PC-3 (cell line): ENCODE measurements at regions of chr17 and their contacts with region 1.

Region 1: DNA sequence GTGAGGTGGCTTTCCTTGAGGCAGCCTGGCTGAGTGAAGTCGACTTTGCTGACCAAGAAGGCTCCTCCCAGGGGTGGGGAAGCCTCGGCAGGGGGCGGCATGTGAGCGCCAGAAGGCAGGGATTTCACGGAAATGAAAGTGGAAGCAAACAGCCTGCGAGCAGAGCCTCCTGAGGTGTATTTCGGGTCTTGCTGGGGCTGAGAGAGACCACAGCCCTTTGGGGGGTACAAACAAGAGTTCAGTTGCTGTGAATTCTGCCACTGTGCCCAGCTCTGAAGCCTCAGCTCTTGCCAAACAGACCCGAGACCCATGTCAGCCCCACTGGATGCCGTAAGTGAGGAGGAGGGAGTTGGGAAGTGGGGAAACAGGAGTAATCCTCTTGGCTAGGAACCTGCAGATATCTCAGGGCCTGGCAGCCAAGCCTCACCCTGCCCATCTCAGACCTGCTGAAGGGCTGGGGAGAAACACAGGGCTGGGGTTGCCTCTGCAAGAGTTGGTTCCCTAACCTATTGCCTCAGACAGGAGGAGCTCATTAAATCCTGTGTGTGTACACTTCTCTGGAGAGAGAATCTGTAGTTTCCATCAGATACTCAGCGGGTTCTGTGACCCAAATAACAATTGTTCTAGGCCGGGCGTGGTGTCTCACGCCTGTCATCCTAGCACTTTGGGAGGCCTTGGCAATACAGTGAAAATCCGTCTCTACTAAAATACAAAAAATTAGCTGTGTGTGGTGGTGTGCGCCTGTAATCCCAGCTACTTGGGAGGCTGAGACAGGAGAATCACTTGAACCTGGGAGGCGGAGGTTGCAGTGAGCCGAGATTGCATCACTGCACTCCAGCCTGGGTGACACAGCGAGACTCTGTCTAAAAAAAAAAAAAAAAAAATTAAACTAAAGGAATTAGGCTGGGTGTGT is at the start of gene IFI35:
- DNase-seq: peak; percentile 60
- ATAC-seq: peak; percentile 72
- H3K4me3 ChIP-seq: peak within 1 kb of the TSS; percentile 77
- H3K27ac ChIP-seq: peak within 1 kb of the TSS; percentile 86
- H3K4me1 ChIP-seq: peaks cover 26% of the 10 kb centered on the region
- H3K27me3 ChIP-seq: no peaks in the 10 kb centered on the region
- CTCF ChIP-seq: peak; percentile 46; the same call in 1 of the 2 replicates
- total RNA-seq, gene IFI35: 8.7 and 12.3 TPM in 2 replicates

Region 2: DNA sequence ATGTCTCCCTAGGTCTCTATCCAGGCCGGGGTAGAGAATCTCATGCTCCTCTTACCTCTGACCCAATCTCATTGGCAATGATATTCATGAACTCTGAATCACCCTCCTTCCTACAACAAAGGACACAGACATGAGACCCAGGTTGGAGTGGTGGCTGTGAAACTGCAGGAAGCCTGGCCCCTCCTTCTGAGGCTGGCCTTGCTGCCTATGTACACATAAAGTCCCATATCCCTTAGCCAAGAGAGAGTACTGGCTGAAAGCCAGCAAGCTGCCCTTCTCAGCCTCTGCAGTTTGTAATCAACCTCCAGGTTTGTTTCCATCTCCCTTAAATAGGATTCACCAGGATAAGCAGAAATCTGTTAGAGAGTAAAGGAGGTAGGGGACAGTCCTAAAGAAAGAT is 53.2 kb before region 1 on chr17:
- CTCF ChIA-PET with region 1: no interaction called
- POLR2A ChIA-PET with region 1: interaction called, 16 read pairs
- intact Hi-C with region 1: no loop called
- DNase-seq: no peak
- ATAC-seq: peak; percentile 45
- H3K4me3 ChIP-seq: no peak overlapping the region
- H3K27ac ChIP-seq: no peak overlapping the region
- H3K4me1 ChIP-seq: no peaks in the 10 kb centered on the region
- H3K27me3 ChIP-seq: no peaks in the 10 kb centered on the region
- CTCF ChIP-seq: no peak

Region 3: DNA sequence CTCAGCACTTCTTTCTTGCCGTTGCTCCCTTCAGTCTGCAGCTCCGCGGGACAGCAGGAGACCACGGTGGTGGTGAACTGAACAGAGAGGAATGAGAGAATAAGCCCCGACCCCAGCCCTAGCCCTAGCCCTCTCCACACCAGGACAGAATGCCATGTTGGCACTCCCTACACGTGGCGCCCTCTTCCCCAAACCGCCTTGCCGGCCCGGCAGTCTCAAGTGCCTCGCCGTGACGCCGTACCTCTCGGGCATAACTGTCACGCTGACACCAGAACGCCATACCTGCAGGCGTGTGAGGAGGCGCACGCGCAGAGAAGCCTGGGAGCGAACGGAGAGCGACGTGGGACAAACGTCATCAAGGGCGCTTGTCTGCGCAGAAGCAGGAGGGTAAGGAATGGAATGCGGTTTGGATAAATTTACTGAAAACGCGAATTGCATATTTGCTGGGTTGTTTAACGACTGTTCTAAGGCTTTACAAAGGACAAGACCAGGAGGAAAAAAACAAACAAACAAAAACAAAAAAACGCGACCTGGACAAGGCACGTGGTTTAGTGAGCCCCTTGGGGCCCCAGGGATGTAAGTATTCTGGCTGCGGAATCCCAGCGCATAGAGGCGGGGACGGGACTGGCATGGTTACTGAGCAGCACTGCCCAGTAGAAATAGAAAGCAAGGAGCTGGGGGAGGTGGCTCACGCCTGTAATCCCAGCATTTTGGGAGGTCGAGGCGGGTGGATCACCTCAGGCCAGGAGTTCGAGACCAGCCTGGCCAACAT is 42.5 kb before region 1 on chr17 and contains the start of gene AARSD1:
- CTCF ChIA-PET with region 1: interaction called, 10 read pairs
- POLR2A ChIA-PET with region 1: no interaction called
- intact Hi-C with region 1: no loop called
- DNase-seq: peak; percentile 90
- ATAC-seq: peak; percentile 97
- H3K4me3 ChIP-seq: peak within 1 kb of the TSS; percentile 87
- H3K27ac ChIP-seq: peak within 1 kb of the TSS; percentile 55
- H3K4me1 ChIP-seq: peaks cover 12% of the 10 kb centered on the region
- H3K27me3 ChIP-seq: no peaks in the 10 kb centered on the region
- CTCF ChIP-seq: no peak
- total RNA-seq, gene AARSD1: 32.5 and 34.7 TPM in 2 replicates

Region 4: DNA sequence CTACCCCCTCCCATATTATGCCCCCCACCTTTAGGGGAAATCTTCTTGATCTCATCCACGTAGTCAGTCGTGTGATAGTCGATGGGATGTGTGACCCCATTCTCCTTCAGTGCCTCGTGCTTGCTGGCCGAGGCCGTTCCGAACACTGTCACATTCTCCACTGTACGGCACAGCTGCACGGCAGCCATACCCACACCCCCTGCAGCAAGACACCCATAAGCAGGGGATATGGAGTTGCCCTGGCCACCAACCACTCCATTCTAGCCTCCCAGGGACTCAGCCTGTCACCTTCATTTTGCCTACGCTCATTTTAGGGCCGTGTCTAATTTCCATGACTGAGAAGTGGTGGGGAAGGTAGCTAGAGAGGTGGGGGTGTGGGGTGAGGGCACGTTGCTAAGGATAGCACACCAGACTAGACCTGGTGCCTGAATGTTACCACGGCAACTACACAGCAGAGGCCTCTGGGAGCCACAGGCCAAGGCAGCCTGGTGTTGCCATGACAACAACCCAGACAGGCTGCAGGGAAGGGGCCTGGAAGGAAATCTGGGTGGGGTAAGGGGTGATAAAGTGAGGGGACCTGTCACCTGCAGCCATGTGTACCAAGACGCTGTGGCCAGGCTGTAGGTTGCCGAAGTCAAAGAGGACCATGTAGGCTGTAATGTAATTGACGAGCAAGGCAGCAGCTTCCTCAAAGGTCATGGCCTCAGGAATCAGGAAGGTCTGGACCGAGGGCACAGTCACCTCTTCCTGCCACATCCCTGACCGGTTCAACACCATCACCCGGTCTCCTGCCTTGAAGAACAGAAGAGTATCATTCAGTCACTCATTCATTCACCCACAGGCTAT is 11.3 kb after region 1 on chr17:
- CTCF ChIA-PET with region 1: no interaction called
- POLR2A ChIA-PET with region 1: interaction called, 10 read pairs
- intact Hi-C with region 1: no loop called
- DNase-seq: no peak
- ATAC-seq: no peak
- H3K4me3 ChIP-seq: no peak overlapping the region
- H3K27ac ChIP-seq: no peak overlapping the region
- H3K4me1 ChIP-seq: peaks cover 5% of the 10 kb centered on the region
- H3K27me3 ChIP-seq: no peaks in the 10 kb centered on the region
- CTCF ChIP-seq: no peak